Activated B cell treated with CpG ODN at 0.5 μM for 24 hours (primary cell): ENCODE measurements at regions of chr19 and their contacts with region 1.

Region 1: GRCh38 chr19:18521885-18522624 is at the start of gene ELL:
- DNase-seq: peak; percentile 100
- ATAC-seq: peak; percentile 89
- H3K4me3 Mint-ChIP-seq: peak within 1 kb of the TSS; percentile 98
- H3K27ac Mint-ChIP-seq: peak within 1 kb of the TSS; percentile 96
- H3K4me1 Mint-ChIP-seq: peaks cover 24% of the 10 kb centered on the region
- H3K27me3 Mint-ChIP-seq: no peaks in the 10 kb centered on the region
- CTCF ChIP-seq: no peak
- total RNA-seq, gene ELL: 29.0 and 32.6 TPM in 2 replicates

Region 2: DNA sequence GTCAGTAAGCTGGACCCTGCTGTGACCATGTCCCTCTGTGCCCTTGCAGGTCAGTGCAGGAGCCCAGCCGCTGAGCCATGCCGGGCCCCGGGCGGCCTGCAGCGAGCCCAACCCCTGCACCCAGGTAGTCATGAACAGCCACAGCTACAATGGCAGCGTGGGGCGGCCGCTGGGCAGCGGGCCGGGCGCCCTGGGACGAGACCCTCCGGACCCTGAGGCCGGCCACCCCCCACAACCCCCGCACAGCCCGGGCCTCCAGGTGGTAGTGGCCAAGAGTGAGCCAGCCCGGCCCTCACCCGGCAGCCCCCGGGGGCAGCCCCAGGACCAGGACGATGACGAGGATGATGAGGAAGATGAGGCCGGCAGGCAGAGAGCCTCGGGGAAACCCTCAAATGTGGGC is 548.3 kb before region 1 on chr19:
- CTCF ChIA-PET with region 1: no interaction called
- POLR2A ChIA-PET with region 1: no interaction called
- intact Hi-C with region 1: no loop called
- DNase-seq: no peak
- ATAC-seq: no peak
- H3K4me3 Mint-ChIP-seq: no peak overlapping the region
- H3K27ac Mint-ChIP-seq: no peak overlapping the region
- H3K4me1 Mint-ChIP-seq: peaks cover under 1% of the 10 kb centered on the region
- H3K27me3 Mint-ChIP-seq: peaks cover 1% of the 10 kb centered on the region
- CTCF ChIP-seq: no peak

Region 3: GRCh38 chr19:18349524-18350128 is 172.4 kb before region 1 on chr19:
- CTCF ChIA-PET with region 1: no interaction called
- POLR2A ChIA-PET with region 1: interaction called, 12 read pairs
- intact Hi-C with region 1: no loop called
- DNase-seq: peak; percentile 28
- ATAC-seq: peak; percentile 52
- H3K4me3 Mint-ChIP-seq: no peak overlapping the region
- H3K27ac Mint-ChIP-seq: no peak overlapping the region
- H3K4me1 Mint-ChIP-seq: no peaks in the 10 kb centered on the region
- H3K27me3 Mint-ChIP-seq: no peaks in the 10 kb centered on the region
- CTCF ChIP-seq: no peak

Region 4: GRCh38 chr19:18557474-18558201 is 35.6 kb after region 1 on chr19 and contains the start of gene KXD1:
- CTCF ChIA-PET with region 1: interaction called, 10 read pairs
- POLR2A ChIA-PET with region 1: interaction called, 77 read pairs
- intact Hi-C with region 1: loop called (anchors 1 kb)
- DNase-seq: peak; percentile 93
- ATAC-seq: peak; percentile 99
- H3K4me3 Mint-ChIP-seq: peak within 1 kb of the TSS; percentile 87
- H3K27ac Mint-ChIP-seq: peak within 1 kb of the TSS; percentile 89
- H3K4me1 Mint-ChIP-seq: peaks cover 25% of the 10 kb centered on the region
- H3K27me3 Mint-ChIP-seq: no peaks in the 10 kb centered on the region
- CTCF ChIP-seq: no peak
- total RNA-seq, gene KXD1: 82.2 and 88.8 TPM in 2 replicates

Region 5: DNA sequence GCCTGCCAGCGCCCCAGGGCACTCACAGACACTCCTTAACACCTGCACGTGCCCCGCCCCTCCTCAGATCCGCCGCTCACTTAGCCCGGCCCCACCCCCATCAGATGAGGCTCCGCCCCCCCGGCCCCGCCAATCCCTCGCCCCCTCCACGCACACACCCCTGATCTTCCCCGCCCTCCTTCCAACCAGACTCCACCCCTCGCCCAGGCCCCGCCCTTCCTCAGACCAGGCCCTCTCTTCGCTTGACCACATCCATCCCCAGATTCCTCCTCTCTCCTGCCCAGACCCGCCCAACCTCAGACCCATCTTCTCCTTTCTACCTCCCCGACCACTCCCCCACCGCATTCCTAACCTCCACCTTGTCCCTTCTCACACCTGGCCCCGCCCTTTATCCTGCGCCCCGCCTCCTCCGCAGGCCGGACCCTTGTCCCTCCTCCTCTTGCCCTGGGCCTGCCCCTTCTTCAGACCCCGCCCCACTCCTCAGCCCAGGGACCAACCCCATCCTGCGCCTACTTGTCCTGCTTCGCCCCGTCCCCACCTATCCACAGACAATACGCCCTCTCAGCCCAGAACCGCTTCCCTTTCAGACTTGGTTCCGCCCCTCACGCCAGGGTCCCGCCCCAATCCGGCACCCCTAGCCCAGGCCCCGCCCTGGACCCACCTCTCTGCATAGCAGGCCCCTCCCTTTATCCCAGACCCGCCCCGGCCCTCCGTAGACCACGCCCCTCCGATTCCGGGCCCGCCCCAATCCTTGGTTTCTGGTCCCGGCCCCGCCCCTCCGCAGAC is 114.3 kb after region 1 on chr19:
- CTCF ChIA-PET with region 1: no interaction called
- POLR2A ChIA-PET with region 1: no interaction called
- intact Hi-C with region 1: loop called (anchors 1 kb)
- DNase-seq: peak; percentile 99
- ATAC-seq: peak; percentile 86
- H3K4me3 Mint-ChIP-seq: peak overlapping the region; percentile 88
- H3K27ac Mint-ChIP-seq: peak overlapping the region; percentile 84
- H3K4me1 Mint-ChIP-seq: peaks cover 23% of the 10 kb centered on the region
- H3K27me3 Mint-ChIP-seq: no peaks in the 10 kb centered on the region
- CTCF ChIP-seq: no peak

Region 6: GRCh38 chr19:18846862-18847548 is 324.9 kb after region 1 on chr19:
- CTCF ChIA-PET with region 1: interaction called, 12 read pairs
- POLR2A ChIA-PET with region 1: no interaction called
- intact Hi-C with region 1: loop called (anchors 1 kb)
- DNase-seq: peak; percentile 56
- ATAC-seq: peak; percentile 77
- H3K4me3 Mint-ChIP-seq: no peak overlapping the region
- H3K27ac Mint-ChIP-seq: peak overlapping the region; percentile 46
- H3K4me1 Mint-ChIP-seq: peaks cover 75% of the 10 kb centered on the region
- H3K27me3 Mint-ChIP-seq: no peaks in the 10 kb centered on the region
- CTCF ChIP-seq: peak; percentile 35